ENCODE measurements at regions of chr6 and their contacts with region 1.

Region 1: GRCh38 chr6:149683256-149683859 is 34.5 kb downstream of the LATS1 start:
- DNase-seq: no peak
- H3K4me3 ChIP-seq: no peak overlapping the region
- CTCF ChIP-seq: no peak
- POLR2A ChIP-seq: no peak

Region 2: GRCh38 chr6:149170564-149171452 is 512.5 kb before region 1 on chr6:
- intact Hi-C with region 1: loop called (anchors 5 kb)
- DNase-seq: no peak
- H3K4me3 ChIP-seq: no peak overlapping the region
- CTCF ChIP-seq: no peak
- POLR2A ChIP-seq: no peak